ENCODE measurements at regions of chr10 and their contacts with region 1.

Region 1: GRCh38 chr10:42801135-42801534 is 18.5 kb downstream of the BMS1 start:
- DNase-seq: peak; percentile 27
- H3K4me3 Mint-ChIP-seq: no peak overlapping the region
- H3K27ac Mint-ChIP-seq: peak overlapping the region; percentile 46
- H3K4me1 Mint-ChIP-seq: peaks cover 28% of the 10 kb centered on the region
- H3K27me3 Mint-ChIP-seq: no peaks in the 10 kb centered on the region

Region 2: GRCh38 chr10:42543840-42544372 is 257.2 kb before region 1 on chr10:
- CTCF ChIA-PET with region 1: no interaction called
- intact Hi-C with region 1: no loop called
- DNase-seq: no peak
- H3K4me3 Mint-ChIP-seq: no peak overlapping the region
- H3K27ac Mint-ChIP-seq: no peak overlapping the region
- H3K4me1 Mint-ChIP-seq: peaks cover 17% of the 10 kb centered on the region
- H3K27me3 Mint-ChIP-seq: no peaks in the 10 kb centered on the region

Region 3: DNA sequence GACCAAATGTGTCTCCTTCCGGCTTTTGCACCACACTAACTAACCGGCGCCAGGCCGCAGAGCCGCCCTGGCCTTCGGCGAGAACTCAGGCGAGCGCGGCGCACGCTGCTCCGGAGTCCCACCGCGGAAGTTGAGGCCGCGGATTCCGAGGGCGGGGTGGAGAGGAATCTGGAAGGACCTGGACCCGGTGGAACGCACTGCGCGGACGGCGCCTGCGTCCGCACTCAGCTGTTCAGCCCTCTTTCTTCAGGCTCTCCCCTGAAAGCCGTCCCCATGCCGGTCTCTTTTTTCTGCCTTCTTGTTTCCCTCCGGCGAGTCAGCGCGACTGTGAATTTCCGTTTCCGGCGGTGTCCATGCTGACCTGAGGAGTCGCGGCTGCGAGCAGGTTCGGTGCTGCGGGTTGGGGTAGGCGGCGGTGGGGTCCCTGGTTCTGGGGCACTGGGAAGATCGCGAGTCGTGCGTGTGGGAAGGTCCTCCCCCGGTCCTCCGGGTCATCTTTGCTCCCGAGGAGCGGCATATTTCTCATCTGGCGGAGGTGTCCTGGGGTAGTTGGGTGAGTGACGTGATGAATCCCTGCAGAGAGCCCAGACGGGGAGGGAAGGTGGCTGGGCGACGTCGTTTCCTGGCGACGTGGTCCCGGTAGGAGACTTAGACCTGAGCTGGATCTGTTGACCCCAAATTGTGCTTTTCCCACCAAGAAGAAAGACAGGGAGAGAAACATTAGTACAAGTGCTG is 18.5 kb before region 1 on chr10 and contains the start of gene BMS1:
- CTCF ChIA-PET with region 1: no interaction called
- intact Hi-C with region 1: loop called (anchors 1 kb)
- DNase-seq: peak; percentile 93
- H3K4me3 Mint-ChIP-seq: peak within 1 kb of the TSS; percentile 82
- H3K27ac Mint-ChIP-seq: peak within 1 kb of the TSS; percentile 89
- H3K4me1 Mint-ChIP-seq: peaks cover 28% of the 10 kb centered on the region
- H3K27me3 Mint-ChIP-seq: no peaks in the 10 kb centered on the region
- total RNA-seq, gene BMS1: 21.4 to 21.6 TPM

Region 4: DNA sequence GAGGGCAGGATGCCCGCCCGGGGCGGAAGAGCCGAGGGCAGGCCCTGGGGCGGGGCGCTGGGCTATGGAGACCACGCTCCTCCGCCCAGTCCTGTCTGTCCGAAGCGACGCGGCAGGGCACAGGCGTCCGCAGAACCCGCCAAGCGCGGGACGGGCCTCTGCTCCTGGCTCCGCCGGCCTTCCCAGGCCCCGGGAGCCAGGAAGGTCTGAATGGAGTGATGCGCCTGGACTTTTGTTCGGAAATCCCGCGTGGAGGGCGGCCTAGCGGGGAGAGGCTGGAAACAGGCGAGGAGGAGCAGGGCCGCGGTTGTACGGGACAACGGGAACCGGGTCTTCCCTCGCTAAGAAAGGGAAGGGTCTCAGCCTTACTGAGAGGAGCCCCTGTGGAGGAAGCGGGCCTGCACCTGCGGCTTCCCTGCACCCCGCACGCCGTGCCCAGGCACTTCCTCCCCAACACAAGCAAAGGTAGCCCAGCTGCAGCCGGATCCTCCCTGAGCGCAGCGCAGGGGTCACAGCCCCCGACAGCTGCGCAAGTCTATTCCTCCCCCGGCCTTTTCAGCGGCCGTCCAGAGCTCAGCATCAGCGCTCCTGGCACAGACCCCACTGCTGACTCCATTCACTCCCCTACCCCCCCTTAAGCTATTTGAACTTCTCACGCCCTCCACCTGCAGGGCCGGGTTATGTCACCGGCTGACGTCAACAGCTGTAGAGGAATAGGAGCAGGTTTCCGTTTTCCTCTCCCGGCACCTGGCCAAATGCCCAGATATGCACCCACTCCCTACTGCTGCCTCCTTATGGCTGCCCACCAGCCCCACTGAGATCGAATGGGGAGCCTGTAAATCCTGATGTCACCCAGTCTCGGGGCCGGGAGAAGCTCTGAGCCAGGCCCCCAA is 132.6 kb after region 1 on chr10:
- CTCF ChIA-PET with region 1: no interaction called
- intact Hi-C with region 1: loop called (anchors 5 kb)
- DNase-seq: peak; percentile 56
- H3K4me3 Mint-ChIP-seq: peak overlapping the region; percentile 71
- H3K27ac Mint-ChIP-seq: no peak overlapping the region
- H3K4me1 Mint-ChIP-seq: peaks cover 13% of the 10 kb centered on the region
- H3K27me3 Mint-ChIP-seq: peaks cover 4% of the 10 kb centered on the region

Region 5: GRCh38 chr10:43120929-43121314 is 319.8 kb after region 1 on chr10:
- CTCF ChIA-PET with region 1: no interaction called
- intact Hi-C with region 1: loop called (anchors 2 kb)
- DNase-seq: peak; percentile 91
- H3K4me3 Mint-ChIP-seq: no peak overlapping the region
- H3K27ac Mint-ChIP-seq: peak overlapping the region; percentile 77
- H3K4me1 Mint-ChIP-seq: peaks cover 16% of the 10 kb centered on the region
- H3K27me3 Mint-ChIP-seq: no peaks in the 10 kb centered on the region

Region 6: GRCh38 chr10:43160046-43160918 is 359.1 kb after region 1 on chr10:
- CTCF ChIA-PET with region 1: no interaction called
- intact Hi-C with region 1: loop called (anchors 2 kb)
- DNase-seq: peak; percentile 57
- H3K4me3 Mint-ChIP-seq: no peak overlapping the region
- H3K27ac Mint-ChIP-seq: peak overlapping the region; percentile 79
- H3K4me1 Mint-ChIP-seq: peaks cover 49% of the 10 kb centered on the region
- H3K27me3 Mint-ChIP-seq: no peaks in the 10 kb centered on the region